ENCODE measurements at regions of chr2 and their contacts with region 1.

Region 1: DNA sequence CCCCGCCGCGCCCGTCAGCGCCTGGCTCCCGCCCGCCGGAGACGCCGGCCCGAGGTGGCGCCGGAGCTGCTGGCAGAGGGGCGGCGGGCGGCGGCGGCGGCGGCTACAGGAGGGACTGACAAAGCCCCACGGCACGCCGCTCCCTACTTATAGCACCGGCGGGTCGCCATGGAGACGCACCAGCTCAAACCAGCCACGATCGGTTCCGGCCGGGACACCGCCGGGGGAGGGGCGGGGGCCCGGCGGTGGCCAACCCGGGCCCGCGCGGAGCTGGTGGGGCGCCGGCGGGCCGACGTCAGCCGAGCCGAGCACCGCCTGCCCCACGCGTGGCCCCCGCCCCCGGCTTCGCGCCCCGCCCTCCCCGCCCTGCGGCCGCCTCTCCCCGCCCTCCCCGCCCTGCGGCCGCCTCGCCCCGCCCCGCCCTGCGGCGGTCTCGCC is at the start of gene ODC1:
- DNase-seq: peak; percentile 96 to 99 (median 98)
- ATAC-seq: peak; percentile 81
- H3K4me3 ChIP-seq: peak within 1 kb of the TSS; percentile 63
- H3K4me3 Mint-ChIP-seq: peak within 1 kb of the TSS; percentile 86
- H3K27ac ChIP-seq: peak within 1 kb of the TSS; percentile 84 to 86
- H3K27ac Mint-ChIP-seq: peak within 1 kb of the TSS; percentile 87
- H3K4me1 ChIP-seq: peaks cover 47% of the 10 kb centered on the region
- H3K4me1 Mint-ChIP-seq: peaks cover 47% of the 10 kb centered on the region
- H3K27me3 ChIP-seq: no peaks in the 10 kb centered on the region
- H3K27me3 Mint-ChIP-seq: no peaks in the 10 kb centered on the region
- CTCF ChIP-seq: no peak
- total RNA-seq, gene ODC1: 162 to 164 TPM

Region 2: DNA sequence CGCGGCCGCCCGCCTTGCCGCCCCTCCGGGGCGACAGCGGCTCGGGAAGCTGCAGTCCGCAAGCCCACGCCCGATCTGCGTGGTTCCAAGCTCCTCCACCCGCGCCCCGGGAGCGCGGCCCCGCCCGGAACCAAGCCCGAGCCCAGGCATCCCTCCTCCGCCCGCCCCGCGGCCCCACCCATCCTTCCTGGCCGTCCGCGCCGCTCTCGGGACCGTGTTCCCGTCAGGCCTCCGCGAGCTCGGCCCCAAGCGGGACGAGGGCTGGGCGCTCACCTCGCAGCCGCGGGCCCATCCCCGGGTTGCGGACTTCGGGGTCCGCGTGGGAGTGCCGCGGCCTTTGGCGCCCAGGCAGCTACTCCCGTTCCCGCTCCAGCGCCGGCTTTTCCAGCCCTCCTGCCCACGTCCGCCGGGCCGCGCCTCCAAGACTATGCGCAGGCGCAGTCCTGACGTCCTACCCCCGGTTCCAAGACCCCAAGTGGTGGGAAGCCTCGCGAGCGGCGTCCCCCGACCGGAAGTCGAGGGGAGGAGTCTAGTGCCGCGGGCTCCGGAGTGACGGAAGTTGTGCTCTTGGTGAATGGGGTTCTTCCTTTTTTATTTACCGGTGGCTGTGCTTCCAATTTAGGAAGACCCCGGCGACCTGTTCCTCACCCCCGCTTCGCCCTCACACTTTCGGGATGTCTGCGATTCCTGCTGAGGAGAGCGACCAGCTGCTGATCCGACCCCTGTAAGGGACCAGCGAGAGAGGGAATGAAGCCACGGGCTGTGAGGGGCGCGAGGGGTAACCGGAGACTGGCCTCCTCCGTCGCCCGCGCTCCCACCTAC is 1024.9 kb before region 1 on chr2 and contains the starts of genes CPSF3 and ITGB1BP1:
- CTCF ChIA-PET with region 1: no interaction called
- POLR2A ChIA-PET with region 1: interaction called, 5 read pairs
- intact Hi-C with region 1: loop called in 1 of 2 experiments (anchors 5 kb)
- DNase-seq: peak; percentile 87 to 98 (median 94)
- ATAC-seq: peak; percentile 84
- H3K4me3 ChIP-seq: peak within 1 kb of the TSS; percentile 99
- H3K4me3 Mint-ChIP-seq: peak within 1 kb of the TSS; percentile 94
- H3K27ac ChIP-seq: peak within 1 kb of the TSS; percentile 73 to 84
- H3K27ac Mint-ChIP-seq: no peak within 1 kb of the TSS
- H3K4me1 ChIP-seq: peaks cover 39% of the 10 kb centered on the region
- H3K4me1 Mint-ChIP-seq: peaks cover 35% of the 10 kb centered on the region
- H3K27me3 ChIP-seq: no peaks in the 10 kb centered on the region
- H3K27me3 Mint-ChIP-seq: no peaks in the 10 kb centered on the region
- CTCF ChIP-seq: no peak
- total RNA-seq, gene CPSF3: 13.2 to 13.8 TPM
- total RNA-seq, gene ITGB1BP1: 24.4 to 25.0 TPM

Region 3: DNA sequence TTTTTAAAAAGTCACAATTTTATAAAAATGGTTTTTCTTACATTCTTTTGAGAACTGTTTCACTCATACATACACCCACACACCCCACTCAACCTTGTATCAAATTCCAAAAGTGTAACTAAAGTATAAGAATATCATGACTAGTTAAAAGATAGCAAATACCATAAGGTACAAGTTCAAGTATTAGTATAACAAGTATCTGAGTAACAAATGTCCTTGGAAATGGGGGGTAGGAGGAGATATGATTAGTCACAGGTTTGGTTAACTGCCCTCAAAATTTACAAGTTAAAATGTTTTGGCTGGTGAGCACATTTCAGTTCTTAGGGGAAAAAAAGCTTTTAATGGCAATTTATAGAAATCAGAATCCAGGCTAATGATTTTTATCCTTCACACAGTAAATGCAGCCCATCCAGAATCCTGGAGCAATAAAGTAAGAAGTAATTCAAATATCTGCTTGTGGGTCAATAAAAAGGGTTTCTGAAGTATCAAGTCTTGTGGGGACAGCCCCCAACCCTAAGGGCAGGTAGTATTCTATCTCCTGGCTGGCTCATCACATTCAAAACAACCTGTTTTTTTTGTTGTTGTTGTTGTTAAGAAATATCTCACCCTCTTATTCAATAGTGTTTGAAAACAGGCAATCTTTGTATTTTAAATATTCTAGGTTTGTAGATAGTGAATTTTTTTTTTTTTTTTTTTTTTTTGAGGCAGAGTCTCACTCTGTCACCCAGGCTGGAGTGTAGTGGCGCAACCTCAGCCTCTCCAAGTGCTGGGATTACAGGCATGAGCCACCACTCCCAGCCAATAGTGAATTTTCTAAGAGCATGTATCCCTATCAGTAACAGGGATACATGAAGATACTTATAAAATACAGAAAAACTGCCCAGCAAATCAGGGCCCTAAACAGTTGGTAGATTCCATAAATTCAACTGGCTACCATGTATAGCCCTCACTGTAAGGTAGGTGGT is 959.4 kb before region 1 on chr2:
- CTCF ChIA-PET with region 1: no interaction called
- POLR2A ChIA-PET with region 1: no interaction called
- intact Hi-C with region 1: no loop called
- DNase-seq: no peak
- ATAC-seq: no peak
- H3K4me3 ChIP-seq: no peak overlapping the region
- H3K4me3 Mint-ChIP-seq: no peak overlapping the region
- H3K27ac ChIP-seq: no peak overlapping the region
- H3K27ac Mint-ChIP-seq: peak overlapping the region; percentile 44
- H3K4me1 ChIP-seq: no peaks in the 10 kb centered on the region
- H3K4me1 Mint-ChIP-seq: no peaks in the 10 kb centered on the region
- H3K27me3 ChIP-seq: no peaks in the 10 kb centered on the region
- H3K27me3 Mint-ChIP-seq: no peaks in the 10 kb centered on the region
- CTCF ChIP-seq: no peak

Region 4: GRCh38 chr2:9843229-9844035 is 604.8 kb before region 1 on chr2 and contains the start of gene TAF1B:
- CTCF ChIA-PET with region 1: no interaction called
- POLR2A ChIA-PET with region 1: interaction called, 11 read pairs
- intact Hi-C with region 1: no loop called
- DNase-seq: peak; percentile 55 to 93 (median 76)
- ATAC-seq: peak; percentile 82
- H3K4me3 ChIP-seq: peak within 1 kb of the TSS; percentile 93
- H3K4me3 Mint-ChIP-seq: peak within 1 kb of the TSS; percentile 93
- H3K27ac ChIP-seq: peak within 1 kb of the TSS; percentile 66 to 75
- H3K27ac Mint-ChIP-seq: peak within 1 kb of the TSS; percentile 90
- H3K4me1 ChIP-seq: peaks cover 19% of the 10 kb centered on the region
- H3K4me1 Mint-ChIP-seq: peaks cover 50% of the 10 kb centered on the region
- H3K27me3 ChIP-seq: no peaks in the 10 kb centered on the region
- H3K27me3 Mint-ChIP-seq: no peaks in the 10 kb centered on the region
- CTCF ChIP-seq: no peak
- total RNA-seq, gene TAF1B: 9.9 to 10.8 TPM

Region 5: GRCh38 chr2:10122386-10123280 is 325.6 kb before region 1 on chr2 and contains the start of gene RRM2:
- CTCF ChIA-PET with region 1: interaction called, 8 read pairs
- POLR2A ChIA-PET with region 1: interaction called, 18 read pairs
- intact Hi-C with region 1: loop called in 1 of 2 experiments (anchors 5 kb)
- DNase-seq: peak; percentile 75 to 93 (median 84)
- ATAC-seq: peak; percentile 77
- H3K4me3 ChIP-seq: peak within 1 kb of the TSS; percentile 61
- H3K4me3 Mint-ChIP-seq: peak within 1 kb of the TSS; percentile 94
- H3K27ac ChIP-seq: no peak within 1 kb of the TSS
- H3K27ac Mint-ChIP-seq: peak within 1 kb of the TSS; percentile 78
- H3K4me1 ChIP-seq: peaks cover 60% of the 10 kb centered on the region
- H3K4me1 Mint-ChIP-seq: peaks cover 45% of the 10 kb centered on the region
- H3K27me3 ChIP-seq: peaks cover 11 to 13% of the 10 kb centered on the region in 2 experiments
- H3K27me3 Mint-ChIP-seq: peaks cover 19% of the 10 kb centered on the region
- CTCF ChIP-seq: no peak
- total RNA-seq, gene RRM2: 1.4 to 1.6 TPM

Region 6: DNA sequence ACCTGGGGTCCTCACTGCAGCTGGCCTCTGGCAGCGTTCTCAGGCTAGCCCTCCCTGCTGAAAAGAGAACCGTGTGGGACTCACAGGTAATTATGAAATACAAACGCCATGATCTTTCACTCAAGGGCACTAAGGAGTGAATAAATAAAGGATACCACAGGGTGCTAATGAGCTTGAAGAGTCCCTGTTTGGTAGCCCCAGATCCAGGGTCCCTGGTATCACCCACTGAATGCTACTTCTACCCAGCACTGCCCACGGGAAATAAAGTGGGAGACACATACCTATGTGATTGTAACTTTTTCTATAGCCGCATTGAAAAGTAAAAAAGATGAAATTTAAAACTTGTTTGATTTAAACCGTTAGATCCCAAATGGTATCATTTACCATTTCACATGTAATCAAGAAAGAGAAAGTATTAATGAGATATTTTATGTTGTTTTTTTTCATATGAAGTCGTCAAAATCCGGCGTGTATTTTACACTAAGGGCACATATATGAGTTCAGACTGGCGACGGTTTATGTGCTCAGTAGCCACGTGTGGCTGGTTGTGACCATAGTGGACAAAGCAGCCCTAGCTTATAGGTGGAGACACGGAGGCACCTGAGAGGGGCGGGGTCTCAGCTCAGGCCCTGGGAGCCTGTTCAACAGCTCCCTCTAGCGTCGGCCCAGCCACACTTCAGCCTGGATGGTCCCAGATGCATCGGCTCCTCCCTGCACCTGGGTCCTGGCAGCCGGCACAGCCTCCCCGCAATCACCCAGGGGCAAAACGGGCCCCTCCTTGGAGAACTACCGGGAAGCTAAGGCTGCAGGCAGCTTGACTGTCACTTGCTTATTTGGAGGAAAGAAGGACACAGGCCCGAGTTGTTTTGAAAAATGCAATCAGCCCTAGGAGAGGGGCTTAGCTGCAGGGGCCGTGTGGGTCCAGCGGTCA is 39.3 kb before region 1 on chr2:
- CTCF ChIA-PET with region 1: interaction called, 6 read pairs
- POLR2A ChIA-PET with region 1: interaction called, 18 read pairs
- intact Hi-C with region 1: no loop called
- DNase-seq: peak; percentile 70 to 92 (median 78)
- ATAC-seq: peak; percentile 90
- H3K4me3 ChIP-seq: no peak overlapping the region
- H3K4me3 Mint-ChIP-seq: peak overlapping the region; percentile 83
- H3K27ac ChIP-seq: peak overlapping the region in 1 of 2 donors; percentile 55
- H3K27ac Mint-ChIP-seq: peak overlapping the region; percentile 87
- H3K4me1 ChIP-seq: peaks cover 51% of the 10 kb centered on the region
- H3K4me1 Mint-ChIP-seq: peaks cover 38% of the 10 kb centered on the region
- H3K27me3 ChIP-seq: no peaks in the 10 kb centered on the region
- H3K27me3 Mint-ChIP-seq: no peaks in the 10 kb centered on the region
- CTCF ChIP-seq: peak; percentile 94

Region 7: DNA sequence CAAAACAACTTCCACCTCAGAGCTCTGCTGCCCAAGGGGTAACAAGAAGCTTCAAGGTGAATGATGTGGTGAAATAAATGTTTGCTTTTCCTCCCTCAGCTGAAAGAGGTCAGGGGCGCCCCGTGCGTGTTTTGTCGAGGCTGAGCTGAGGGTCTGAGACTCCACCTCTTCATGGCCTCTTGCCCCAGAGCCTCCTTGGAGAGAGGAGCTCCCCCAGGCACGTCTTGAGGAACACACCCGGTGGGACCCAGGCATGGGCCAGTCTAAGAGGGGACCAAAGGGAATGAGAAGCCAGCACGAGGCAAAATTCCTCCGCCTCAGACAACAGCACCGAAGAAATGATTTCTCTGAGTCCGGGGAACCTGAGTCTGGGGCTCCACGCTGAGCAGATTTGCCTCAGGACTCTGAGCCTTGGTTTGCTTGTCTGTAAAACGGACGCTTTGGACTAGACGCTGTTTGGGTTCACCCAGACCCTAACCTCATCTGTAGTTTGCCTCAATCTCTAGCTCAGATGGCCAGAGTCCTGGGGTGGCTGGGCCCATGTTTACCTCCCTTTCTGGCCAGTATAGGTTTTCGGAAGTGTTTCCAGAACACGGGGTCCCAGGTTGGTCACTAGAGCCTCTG is 56.3 kb after region 1 on chr2:
- CTCF ChIA-PET with region 1: no interaction called
- POLR2A ChIA-PET with region 1: no interaction called
- intact Hi-C with region 1: no loop called
- DNase-seq: no peak
- ATAC-seq: no peak
- H3K4me3 ChIP-seq: no peak overlapping the region
- H3K4me3 Mint-ChIP-seq: no peak overlapping the region
- H3K27ac ChIP-seq: no peak overlapping the region
- H3K27ac Mint-ChIP-seq: no peak overlapping the region
- H3K4me1 ChIP-seq: no peaks in the 10 kb centered on the region
- H3K4me1 Mint-ChIP-seq: no peaks in the 10 kb centered on the region
- H3K27me3 ChIP-seq: no peaks in the 10 kb centered on the region
- H3K27me3 Mint-ChIP-seq: no peaks in the 10 kb centered on the region
- CTCF ChIP-seq: no peak

Region 8: DNA sequence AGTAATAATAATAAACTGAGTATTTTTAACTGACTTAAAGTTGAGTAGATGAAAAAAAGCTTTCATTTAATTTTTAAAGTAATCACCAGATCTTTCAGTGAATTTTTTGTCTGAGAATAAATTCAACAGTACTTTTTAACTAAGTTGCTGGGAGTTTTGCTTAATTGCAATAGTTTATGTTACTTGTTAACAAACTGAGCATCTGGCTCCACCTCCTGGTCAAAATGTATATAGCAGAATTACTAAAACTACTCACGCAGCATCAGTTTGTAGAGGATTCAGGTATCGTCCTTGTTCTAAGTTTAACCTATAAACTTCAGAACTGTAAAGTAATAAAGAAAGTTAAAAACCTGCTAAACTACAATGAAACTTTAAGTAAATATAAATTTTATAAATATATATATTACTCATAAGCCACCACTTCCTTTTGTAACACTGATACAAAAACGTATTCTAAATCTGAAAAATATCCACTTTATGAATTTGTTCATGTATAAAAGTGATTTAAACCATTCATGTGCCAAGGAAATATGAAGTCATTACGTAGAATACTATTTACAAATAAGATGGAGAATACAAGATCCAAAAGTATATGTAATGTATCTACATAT is 220.3 kb after region 1 on chr2:
- CTCF ChIA-PET with region 1: no interaction called
- POLR2A ChIA-PET with region 1: no interaction called
- intact Hi-C with region 1: loop called in 1 of 2 experiments (anchors 5 kb)
- DNase-seq: peak in 5 of 14 experiments; percentile 14 to 82 (median 72)
- ATAC-seq: peak; percentile 71
- H3K4me3 ChIP-seq: no peak overlapping the region
- H3K4me3 Mint-ChIP-seq: no peak overlapping the region
- H3K27ac ChIP-seq: no peak overlapping the region
- H3K27ac Mint-ChIP-seq: no peak overlapping the region
- H3K4me1 ChIP-seq: no peaks in the 10 kb centered on the region
- H3K4me1 Mint-ChIP-seq: peaks cover 6% of the 10 kb centered on the region
- H3K27me3 ChIP-seq: no peaks in the 10 kb centered on the region
- H3K27me3 Mint-ChIP-seq: no peaks in the 10 kb centered on the region
- CTCF ChIP-seq: peak; percentile 89

Measured in CD4-positive, alpha-beta T cell (primary cell).